ENCODE measurements at regions of chr9 and their contacts with region 1.

Region 1: DNA sequence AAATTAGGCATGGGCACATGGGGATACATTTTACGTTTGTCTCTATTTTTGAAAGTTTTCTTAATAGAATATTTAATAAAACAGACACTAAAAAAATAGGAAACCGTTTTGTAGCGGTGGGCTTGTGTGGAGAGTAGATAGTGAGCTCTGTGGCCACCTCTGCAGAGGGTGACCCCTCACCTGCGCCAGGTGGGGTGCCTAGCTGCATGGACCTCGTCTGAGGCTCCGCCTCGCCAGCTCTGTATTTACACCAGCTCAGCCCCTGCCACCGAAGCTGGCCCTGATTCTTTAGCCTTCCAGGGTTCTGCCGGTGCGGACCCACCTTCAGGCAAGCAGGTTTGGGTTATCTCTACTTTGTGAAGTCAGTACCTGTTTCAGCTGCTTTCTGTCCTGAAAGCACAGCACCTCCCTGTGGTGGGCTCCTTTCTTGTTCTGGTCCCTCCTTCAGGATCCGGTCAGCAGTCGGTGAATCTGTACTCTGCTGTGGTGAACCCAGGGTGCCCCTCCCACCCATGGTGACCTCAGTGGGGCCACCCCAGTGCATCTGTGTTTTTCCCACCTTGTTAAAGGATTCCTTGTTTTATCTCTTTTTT is 105.2 kb upstream of the CACNA1B start:
- DNase-seq: no peak
- H3K4me3 ChIP-seq: no peak overlapping the region
- H3K27ac ChIP-seq: no peak overlapping the region
- H3K4me1 ChIP-seq: no peaks in the 10 kb centered on the region
- H3K27me3 ChIP-seq: no peaks in the 10 kb centered on the region
- CTCF ChIP-seq: no peak
- POLR2A ChIP-seq: no peak

Region 2: DNA sequence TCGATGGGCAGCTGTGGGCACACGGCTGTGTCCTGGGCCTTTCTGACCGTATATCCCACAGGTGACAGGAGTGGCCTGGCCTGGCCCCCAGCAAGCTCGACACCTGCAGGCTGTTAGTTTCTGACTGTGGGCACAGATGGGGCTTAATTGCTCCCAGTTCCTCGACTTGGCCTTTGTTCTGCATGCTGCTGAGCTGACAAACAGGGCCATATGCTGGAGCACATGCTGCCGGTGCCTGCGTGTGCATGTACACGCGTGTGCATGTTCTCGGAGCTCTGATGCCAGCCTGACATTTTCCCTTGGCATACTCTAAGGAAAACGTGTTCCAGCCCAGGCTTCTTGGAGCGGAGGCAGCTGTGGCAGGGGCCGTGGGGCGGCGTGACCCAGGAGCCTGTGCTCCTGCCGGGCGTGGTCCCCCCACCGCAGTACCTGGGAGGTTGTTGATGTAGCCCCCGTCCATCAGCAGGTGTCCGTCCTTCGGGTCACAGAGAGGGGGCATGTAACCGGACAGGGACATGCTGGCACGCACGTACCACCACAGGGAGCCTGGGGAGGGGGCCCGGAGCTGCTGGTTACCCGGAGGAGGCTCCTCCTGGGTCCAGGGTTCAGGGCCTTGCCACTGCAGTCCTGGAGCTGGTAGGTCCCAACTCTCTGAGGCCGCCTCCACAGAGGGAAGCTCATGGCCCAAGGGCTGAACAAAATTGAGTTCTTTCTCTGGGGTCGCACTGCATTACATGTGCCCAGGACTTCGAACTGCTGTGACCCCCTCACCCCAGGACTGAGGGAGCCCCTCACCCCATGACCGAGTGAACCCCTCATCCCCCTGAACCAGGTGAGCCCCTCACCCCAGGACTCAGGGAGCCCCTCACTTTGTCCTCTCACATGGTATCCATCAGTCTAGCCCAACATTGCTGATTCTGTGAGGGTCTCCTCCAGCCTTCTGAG is 309.1 kb before region 1 on chr9:
- intact Hi-C with region 1: no loop called
- DNase-seq: no peak
- H3K4me3 ChIP-seq: no peak overlapping the region
- H3K27ac ChIP-seq: no peak overlapping the region
- H3K4me1 ChIP-seq: peaks cover 6% of the 10 kb centered on the region
- H3K27me3 ChIP-seq: no peaks in the 10 kb centered on the region
- CTCF ChIP-seq: no peak
- POLR2A ChIP-seq: no peak

Region 3: GRCh38 chr9:137672907-137673791 is 99.2 kb before region 1 on chr9:
- intact Hi-C with region 1: loop called (anchors 10 kb)
- DNase-seq: peak; percentile 64
- H3K4me3 ChIP-seq: no peak overlapping the region
- H3K27ac ChIP-seq: no peak overlapping the region
- H3K4me1 ChIP-seq: peaks cover 21% of the 10 kb centered on the region
- H3K27me3 ChIP-seq: no peaks in the 10 kb centered on the region
- CTCF ChIP-seq: peak; percentile 84 to 91 (median 88)
- POLR2A ChIP-seq: no peak